ENCODE measurements at regions of chr12 and their contacts with region 1.

Region 1: GRCh38 chr12:58443273-58443980 is 476.9 kb downstream of the LRIG3 start:
- DNase-seq: no peak
- CTCF ChIP-seq: peak; percentile 42

Region 2: GRCh38 chr12:58346032-58346632 is 97.3 kb before region 1 on chr12:
- CTCF ChIA-PET with region 1: interaction called, 17 read pairs
- POLR2A ChIA-PET with region 1: no interaction called
- DNase-seq: peak; percentile 25
- CTCF ChIP-seq: peak; percentile 74

Region 3: GRCh38 chr12:58358369-58358768 is 85.1 kb before region 1 on chr12:
- CTCF ChIA-PET with region 1: no interaction called
- POLR2A ChIA-PET with region 1: no interaction called
- DNase-seq: no peak
- CTCF ChIP-seq: no peak

Measured in GM10248 (cell line).